Activated CD8-positive, alpha-beta T cell treated with anti-CD3 and anti-CD28 coated beads for 36 hours (primary cell): ENCODE measurements at regions of chr3 and their contacts with region 1.

Region 1: GRCh38 chr3:108489771-108490170 is 20.6 kb downstream of the MYH15 start:
- DNase-seq: peak; percentile 56
- ATAC-seq: peak; percentile 79
- H3K4me3 Mint-ChIP-seq: no peak overlapping the region
- H3K27ac Mint-ChIP-seq: no peak overlapping the region
- H3K4me1 Mint-ChIP-seq: peaks cover 4% of the 10 kb centered on the region
- H3K27me3 Mint-ChIP-seq: no peaks in the 10 kb centered on the region
- CTCF ChIP-seq: peak; percentile 84

Region 2: GRCh38 chr3:108500728-108501127 is 11.0 kb after region 1 on chr3:
- CTCF ChIA-PET with region 1: interaction called, 17 read pairs
- POLR2A ChIA-PET with region 1: no interaction called
- intact Hi-C with region 1: no loop called
- DNase-seq: no peak
- ATAC-seq: no peak
- H3K4me3 Mint-ChIP-seq: no peak overlapping the region
- H3K27ac Mint-ChIP-seq: no peak overlapping the region
- H3K4me1 Mint-ChIP-seq: no peaks in the 10 kb centered on the region
- H3K27me3 Mint-ChIP-seq: peaks cover 1% of the 10 kb centered on the region
- CTCF ChIP-seq: no peak

Region 3: GRCh38 chr3:108552267-108553159 is 62.7 kb after region 1 on chr3:
- CTCF ChIA-PET with region 1: interaction called, 19 read pairs
- POLR2A ChIA-PET with region 1: no interaction called
- intact Hi-C with region 1: loop called (anchors 5 kb)
- DNase-seq: no peak
- ATAC-seq: no peak
- H3K4me3 Mint-ChIP-seq: no peak overlapping the region
- H3K27ac Mint-ChIP-seq: no peak overlapping the region
- H3K4me1 Mint-ChIP-seq: no peaks in the 10 kb centered on the region
- H3K27me3 Mint-ChIP-seq: no peaks in the 10 kb centered on the region
- CTCF ChIP-seq: peak; percentile 57